GM13976 (cell line): ENCODE measurements at regions of chr3 and their contacts with region 1.

Region 1: DNA sequence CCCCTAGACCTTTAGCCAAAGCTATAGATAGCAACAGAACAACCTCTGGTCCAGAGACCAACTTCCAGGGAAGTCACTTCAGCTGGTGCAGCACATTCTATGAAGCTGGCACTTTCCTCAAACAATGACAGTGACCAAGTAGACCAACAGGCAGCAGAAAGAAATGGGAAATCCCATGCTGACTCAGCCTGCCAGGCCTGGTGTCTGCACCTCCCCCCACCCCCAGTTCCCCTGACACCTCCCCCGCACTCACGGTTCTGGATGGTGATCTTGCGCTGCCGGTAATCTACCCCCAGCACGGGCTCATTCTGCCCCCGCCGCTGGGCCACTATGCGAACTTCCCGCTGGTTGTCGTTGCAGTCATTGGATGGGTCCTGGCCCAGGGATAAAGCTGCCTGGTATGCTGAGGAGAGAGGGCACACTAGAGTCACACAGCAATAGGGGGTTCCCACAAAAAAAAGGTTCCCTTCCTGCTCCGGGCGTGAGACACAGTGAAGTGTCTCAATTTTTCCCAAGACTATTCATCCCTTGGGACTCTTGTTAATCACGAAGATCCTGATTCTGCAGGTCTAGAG is 17.0 kb downstream of the ILDR1 start:
- DNase-seq: peak; percentile 67
- CTCF ChIP-seq: no peak

Region 2: GRCh38 chr3:121735047-121735696 is 269.9 kb before region 1 on chr3:
- in situ Hi-C with region 1: no loop called
- DNase-seq: peak; percentile 31
- CTCF ChIP-seq: no peak

Region 3: DNA sequence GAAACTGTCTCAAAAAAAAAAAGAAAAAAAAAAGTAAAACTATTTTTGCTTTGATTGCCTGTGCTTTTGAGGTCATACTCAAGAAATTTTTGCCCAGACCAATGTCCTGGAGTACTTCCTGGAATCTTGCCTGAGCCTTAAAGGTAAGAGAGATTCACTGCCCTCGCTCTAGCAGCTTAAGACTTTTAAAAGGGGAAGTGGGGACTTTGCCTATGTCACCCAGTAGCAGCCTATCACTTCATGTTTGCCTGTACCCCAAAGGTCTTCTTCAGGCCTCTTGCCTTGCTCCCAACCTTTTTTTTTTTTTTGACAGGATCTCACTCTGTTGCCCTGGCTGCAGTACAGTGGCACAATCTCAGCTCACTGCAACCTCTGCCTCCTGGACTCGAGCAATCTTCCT is 236.6 kb before region 1 on chr3:
- in situ Hi-C with region 1: no loop called
- DNase-seq: peak; percentile 20
- CTCF ChIP-seq: no peak

Region 4: GRCh38 chr3:122081543-122082247 is 76.6 kb after region 1 on chr3:
- in situ Hi-C with region 1: loop called (anchors 5 kb)
- DNase-seq: no peak
- CTCF ChIP-seq: no peak

Region 5: DNA sequence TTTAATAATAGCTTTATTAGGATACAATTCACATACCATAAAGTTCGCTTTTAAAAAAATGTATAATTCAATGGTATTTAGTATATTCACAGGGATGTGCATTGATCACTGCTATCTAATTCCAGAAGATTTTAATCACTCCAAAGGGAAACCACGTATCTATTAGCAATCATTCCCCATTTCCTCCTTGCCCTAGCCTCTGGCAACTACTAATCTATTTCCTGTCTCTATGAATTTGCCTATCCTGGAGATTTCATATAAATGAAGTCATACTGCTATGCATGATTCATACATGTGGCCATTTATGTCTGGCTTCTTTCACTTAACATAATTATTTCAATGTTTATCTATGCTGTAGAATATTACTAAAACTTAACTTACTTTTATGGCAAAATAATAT is 146.4 kb after region 1 on chr3:
- in situ Hi-C with region 1: no loop called
- DNase-seq: no peak
- CTCF ChIP-seq: no peak